ENCODE measurements at regions of chr3 and their contacts with region 1.

Region 1: GRCh38 chr3:100681496-100681895 is 27.8 kb upstream of the TFG start:
- DNase-seq: no peak
- ATAC-seq: no peak
- H3K4me3 ChIP-seq: no peak overlapping the region
- H3K4me3 Mint-ChIP-seq: no peak overlapping the region
- H3K27ac ChIP-seq: no peak overlapping the region
- H3K27ac Mint-ChIP-seq: no peak overlapping the region
- H3K4me1 ChIP-seq: no peaks in the 10 kb centered on the region
- H3K4me1 Mint-ChIP-seq: peaks cover 2% of the 10 kb centered on the region
- H3K27me3 ChIP-seq: no peaks in the 10 kb centered on the region
- H3K27me3 Mint-ChIP-seq: no peaks in the 10 kb centered on the region
- CTCF ChIP-seq: no peak

Region 2: GRCh38 chr3:100627491-100627890 is 54.0 kb before region 1 on chr3:
- CTCF ChIA-PET with region 1: no interaction called
- POLR2A ChIA-PET with region 1: no interaction called
- intact Hi-C with region 1: no loop called
- DNase-seq: no peak
- ATAC-seq: no peak
- H3K4me3 ChIP-seq: no peak overlapping the region
- H3K4me3 Mint-ChIP-seq: no peak overlapping the region
- H3K27ac ChIP-seq: no peak overlapping the region
- H3K27ac Mint-ChIP-seq: no peak overlapping the region
- H3K4me1 ChIP-seq: no peaks in the 10 kb centered on the region
- H3K4me1 Mint-ChIP-seq: peaks cover 25% of the 10 kb centered on the region
- H3K27me3 ChIP-seq: no peaks in the 10 kb centered on the region
- H3K27me3 Mint-ChIP-seq: no peaks in the 10 kb centered on the region
- CTCF ChIP-seq: no peak

Region 3: DNA sequence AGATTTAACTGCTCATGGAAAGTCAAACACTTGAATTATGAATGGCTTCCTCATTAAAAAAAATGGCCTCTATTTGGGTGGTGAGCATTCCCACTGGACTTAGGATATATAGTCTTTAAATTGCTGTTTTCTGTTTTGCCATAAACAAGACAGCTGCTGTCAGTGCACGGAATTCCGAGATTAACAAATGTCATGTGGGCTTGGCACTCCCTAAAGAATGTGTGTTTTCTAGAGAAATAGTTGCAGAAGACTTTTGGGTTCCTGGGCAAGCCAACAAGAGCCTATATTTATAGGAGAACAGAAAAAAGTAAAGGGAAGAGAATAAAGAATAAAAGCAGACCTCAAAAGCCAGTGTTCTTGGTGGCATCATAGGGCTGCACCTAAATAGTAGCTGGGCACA is 14.2 kb after region 1 on chr3:
- CTCF ChIA-PET with region 1: interaction called, 3 read pairs
- POLR2A ChIA-PET with region 1: interaction called, 3 read pairs
- intact Hi-C with region 1: loop called in 1 of 2 experiments (anchors 2 kb)
- DNase-seq: no peak
- ATAC-seq: no peak
- H3K4me3 ChIP-seq: no peak overlapping the region
- H3K4me3 Mint-ChIP-seq: no peak overlapping the region
- H3K27ac ChIP-seq: no peak overlapping the region
- H3K27ac Mint-ChIP-seq: no peak overlapping the region
- H3K4me1 ChIP-seq: no peaks in the 10 kb centered on the region
- H3K4me1 Mint-ChIP-seq: no peaks in the 10 kb centered on the region
- H3K27me3 ChIP-seq: peaks cover 0 to 8% of the 10 kb centered on the region in 2 experiments
- H3K27me3 Mint-ChIP-seq: peaks cover 24% of the 10 kb centered on the region
- CTCF ChIP-seq: no peak

Region 4: DNA sequence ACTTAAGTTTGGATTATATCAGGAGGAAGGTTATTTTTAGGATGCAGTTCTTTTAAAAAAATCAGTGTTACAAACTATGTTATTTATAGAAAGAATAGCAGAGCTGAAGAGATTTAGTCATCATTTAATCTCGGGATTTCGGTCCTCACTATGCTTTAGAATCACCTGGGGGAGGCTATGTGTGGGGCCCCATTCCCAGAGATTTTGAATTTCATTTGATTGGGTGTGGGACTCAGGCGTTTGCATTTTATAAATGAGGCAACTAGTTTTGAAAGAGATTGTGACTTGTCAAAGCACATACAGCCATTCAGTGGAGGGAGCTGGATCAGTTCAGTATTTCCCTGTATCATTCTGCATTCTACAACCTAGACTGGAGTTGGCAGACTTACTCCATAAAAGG is 64.6 kb after region 1 on chr3:
- CTCF ChIA-PET with region 1: no interaction called
- POLR2A ChIA-PET with region 1: no interaction called
- intact Hi-C with region 1: no loop called
- DNase-seq: no peak
- ATAC-seq: no peak
- H3K4me3 ChIP-seq: no peak overlapping the region
- H3K4me3 Mint-ChIP-seq: no peak overlapping the region
- H3K27ac ChIP-seq: no peak overlapping the region
- H3K27ac Mint-ChIP-seq: no peak overlapping the region
- H3K4me1 ChIP-seq: no peaks in the 10 kb centered on the region
- H3K4me1 Mint-ChIP-seq: no peaks in the 10 kb centered on the region
- H3K27me3 ChIP-seq: no peaks in the 10 kb centered on the region
- H3K27me3 Mint-ChIP-seq: no peaks in the 10 kb centered on the region
- CTCF ChIP-seq: no peak